ENCODE measurements at regions of chr12 and their contacts with region 1.

Region 1: DNA sequence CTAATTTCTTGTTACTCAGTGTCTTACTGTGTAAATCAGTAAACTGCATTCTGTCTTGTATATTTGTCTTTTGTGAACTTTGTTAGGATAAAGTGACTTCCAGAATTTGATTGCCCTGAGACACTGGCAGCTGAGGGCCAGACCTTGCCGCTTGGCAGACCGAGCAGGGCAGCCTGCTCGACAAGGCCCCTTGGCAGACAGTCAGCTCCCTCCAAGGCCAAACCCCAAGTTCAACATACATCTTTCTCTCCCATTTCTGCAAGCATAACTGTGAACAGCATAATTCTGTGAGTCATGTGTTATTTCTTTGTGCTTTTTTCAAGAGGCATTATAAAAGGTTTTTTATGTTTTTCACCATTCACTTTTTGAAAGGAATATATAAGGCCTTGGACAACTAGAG is 39.2 kb upstream of the BMAL2 start:
- DNase-seq: no peak
- H3K4me3 ChIP-seq: peak overlapping the region in 1 of 2 donors; percentile 15
- H3K27ac ChIP-seq: peak overlapping the region; percentile 58 to 90
- H3K4me1 ChIP-seq: peaks cover 16 to 93% of the 10 kb centered on the region in 2 donors
- H3K27me3 ChIP-seq: no peaks in the 10 kb centered on the region
- CTCF ChIP-seq: no peak

Region 2: DNA sequence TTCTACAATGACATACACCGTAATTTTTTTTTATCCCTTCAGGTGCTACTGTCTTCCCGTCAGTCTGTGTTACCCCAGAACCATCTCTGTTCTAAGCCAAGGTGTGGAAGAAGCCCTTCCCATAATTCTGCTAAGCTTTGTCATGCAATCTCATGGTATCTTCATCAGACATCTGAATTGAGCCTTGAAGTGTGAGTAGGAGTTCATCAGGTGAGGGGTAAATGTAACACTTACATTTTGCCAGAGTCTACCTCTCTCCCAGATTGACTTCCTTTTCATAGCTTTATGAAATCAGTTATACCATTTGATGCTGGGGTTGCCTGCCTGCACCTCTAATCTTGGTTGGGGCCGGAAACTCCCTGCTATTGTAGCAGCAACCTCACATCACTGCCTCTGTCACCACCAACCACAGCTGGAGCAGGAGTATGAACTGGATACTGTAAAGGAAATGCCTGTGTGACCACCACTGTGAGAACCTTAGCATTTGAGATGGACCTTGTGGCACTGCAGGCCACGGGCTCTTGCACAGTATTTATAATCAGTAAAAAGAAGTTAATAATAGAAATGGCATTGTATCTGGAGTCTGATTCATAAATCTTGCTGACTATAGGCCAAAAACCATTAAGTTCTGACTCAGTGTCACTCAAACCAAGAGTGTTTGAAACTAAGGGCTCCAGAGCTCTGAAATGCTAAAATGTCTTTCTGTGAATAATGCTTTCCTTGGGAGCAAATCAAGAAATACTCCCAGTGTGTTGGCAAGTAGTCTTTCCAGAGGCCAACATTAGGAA is 108.0 kb before region 1 on chr12:
- intact Hi-C with region 1: loop called (anchors 5 kb)
- DNase-seq: no peak
- H3K4me3 ChIP-seq: no peak overlapping the region
- H3K27ac ChIP-seq: peak overlapping the region; percentile 92 to 95
- H3K4me1 ChIP-seq: peaks cover 18 to 50% of the 10 kb centered on the region in 2 donors
- H3K27me3 ChIP-seq: no peaks in the 10 kb centered on the region
- CTCF ChIP-seq: no peak

Region 3: GRCh38 chr12:27257104-27257843 is 36.2 kb before region 1 on chr12:
- intact Hi-C with region 1: loop called (anchors 5 kb)
- DNase-seq: no peak
- H3K4me3 ChIP-seq: peak overlapping the region in 1 of 2 donors; percentile 11
- H3K27ac ChIP-seq: peak overlapping the region; percentile 69 to 83
- H3K4me1 ChIP-seq: peaks cover 9 to 74% of the 10 kb centered on the region in 2 donors
- H3K27me3 ChIP-seq: no peaks in the 10 kb centered on the region
- CTCF ChIP-seq: no peak

Measured in ascending aorta (tissue), 2 donors.